ENCODE measurements at regions of chr1 and their contacts with region 1.

Region 1: DNA sequence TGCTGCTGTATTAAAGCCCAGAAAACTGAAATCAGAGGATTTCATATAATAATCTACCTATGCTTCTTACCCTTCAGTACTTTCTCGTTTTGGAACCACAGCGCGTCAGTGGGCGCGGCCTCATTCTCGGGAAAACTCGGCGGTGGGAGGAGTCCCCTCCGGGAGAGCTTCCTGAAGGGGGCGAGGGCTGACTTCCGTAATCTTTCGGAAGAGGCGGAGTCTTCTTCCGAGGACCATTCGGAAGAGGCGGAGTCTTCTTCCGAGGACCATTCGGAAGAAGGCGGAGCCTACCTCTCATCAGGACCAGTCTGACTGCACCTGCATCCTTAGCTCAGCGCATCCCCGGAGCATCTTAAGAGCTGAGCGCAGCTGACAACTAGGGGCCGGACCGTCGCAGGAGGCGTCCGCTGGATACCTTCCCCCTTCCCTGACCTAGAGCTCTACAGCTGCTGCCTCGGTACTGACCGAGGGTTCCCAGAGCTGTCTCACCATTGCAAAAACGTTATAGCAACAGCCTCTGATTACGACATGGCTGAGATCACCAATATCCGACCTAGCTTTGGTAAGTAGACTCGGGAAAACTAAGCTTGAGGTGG is at the start of gene SYT11:
- DNase-seq: peak; percentile 98
- H3K4me3 Mint-ChIP-seq: peak within 1 kb of the TSS; percentile 100
- H3K27ac Mint-ChIP-seq: peak within 1 kb of the TSS; percentile 83
- H3K4me1 Mint-ChIP-seq: peaks cover 53% of the 10 kb centered on the region
- H3K27me3 Mint-ChIP-seq: peaks cover 24% of the 10 kb centered on the region
- total RNA-seq, gene SYT11: 6.3 to 7.0 TPM

Region 2: DNA sequence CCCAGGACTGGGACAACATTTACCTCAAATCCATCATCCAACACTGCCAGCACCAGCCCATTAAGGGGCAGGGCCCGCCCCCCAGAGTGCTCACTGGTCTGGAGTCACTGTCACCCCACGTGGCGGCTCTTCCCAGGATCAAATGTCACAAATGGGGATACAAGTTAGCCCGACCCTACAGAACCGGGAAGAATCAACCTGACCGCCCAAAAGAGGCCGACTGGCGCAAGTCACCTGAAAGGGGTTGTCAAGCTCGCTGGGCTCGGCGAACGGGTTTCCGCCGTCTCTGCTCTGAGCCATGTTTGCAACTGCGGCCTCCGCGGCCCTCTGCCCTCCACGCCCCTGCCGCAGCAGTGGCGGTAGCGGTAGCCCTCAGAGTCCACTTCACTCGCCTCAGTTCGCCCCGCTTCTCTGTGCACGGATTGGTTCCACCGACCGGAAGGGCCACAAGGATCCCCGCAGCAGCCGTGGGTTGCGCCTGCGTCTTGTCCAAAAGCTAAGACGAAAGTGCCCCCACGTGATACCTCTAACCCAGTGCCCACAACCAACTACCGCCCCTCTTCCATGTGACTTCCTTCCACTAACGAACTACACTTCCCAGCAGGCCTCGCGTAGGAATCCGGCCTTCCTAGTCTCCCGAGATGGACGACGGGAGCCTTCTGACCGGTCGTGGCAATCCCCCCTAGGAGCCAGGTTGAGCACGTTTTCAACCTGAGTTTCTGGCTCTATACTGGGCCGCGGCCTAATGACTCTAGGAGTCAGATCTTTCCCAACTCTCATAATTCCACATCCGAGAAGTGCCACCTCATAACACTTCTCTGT is 597.3 kb before region 1 on chr1 and contains the start of gene SCAMP3:
- CTCF ChIA-PET with region 1: no interaction called
- intact Hi-C with region 1: loop called (anchors 5 kb)
- DNase-seq: peak; percentile 95
- H3K4me3 Mint-ChIP-seq: peak within 1 kb of the TSS; percentile 95
- H3K27ac Mint-ChIP-seq: peak within 1 kb of the TSS; percentile 93
- H3K4me1 Mint-ChIP-seq: peaks cover 27% of the 10 kb centered on the region
- H3K27me3 Mint-ChIP-seq: no peaks in the 10 kb centered on the region
- total RNA-seq, gene SCAMP3: 80.3 to 82.9 TPM

Region 3: GRCh38 chr1:155305881-155306391 is 553.4 kb before region 1 on chr1:
- CTCF ChIA-PET with region 1: no interaction called
- intact Hi-C with region 1: no loop called
- DNase-seq: no peak
- H3K4me3 Mint-ChIP-seq: no peak overlapping the region
- H3K27ac Mint-ChIP-seq: peak overlapping the region; percentile 61
- H3K4me1 Mint-ChIP-seq: peaks cover 17% of the 10 kb centered on the region
- H3K27me3 Mint-ChIP-seq: no peaks in the 10 kb centered on the region

Region 4: DNA sequence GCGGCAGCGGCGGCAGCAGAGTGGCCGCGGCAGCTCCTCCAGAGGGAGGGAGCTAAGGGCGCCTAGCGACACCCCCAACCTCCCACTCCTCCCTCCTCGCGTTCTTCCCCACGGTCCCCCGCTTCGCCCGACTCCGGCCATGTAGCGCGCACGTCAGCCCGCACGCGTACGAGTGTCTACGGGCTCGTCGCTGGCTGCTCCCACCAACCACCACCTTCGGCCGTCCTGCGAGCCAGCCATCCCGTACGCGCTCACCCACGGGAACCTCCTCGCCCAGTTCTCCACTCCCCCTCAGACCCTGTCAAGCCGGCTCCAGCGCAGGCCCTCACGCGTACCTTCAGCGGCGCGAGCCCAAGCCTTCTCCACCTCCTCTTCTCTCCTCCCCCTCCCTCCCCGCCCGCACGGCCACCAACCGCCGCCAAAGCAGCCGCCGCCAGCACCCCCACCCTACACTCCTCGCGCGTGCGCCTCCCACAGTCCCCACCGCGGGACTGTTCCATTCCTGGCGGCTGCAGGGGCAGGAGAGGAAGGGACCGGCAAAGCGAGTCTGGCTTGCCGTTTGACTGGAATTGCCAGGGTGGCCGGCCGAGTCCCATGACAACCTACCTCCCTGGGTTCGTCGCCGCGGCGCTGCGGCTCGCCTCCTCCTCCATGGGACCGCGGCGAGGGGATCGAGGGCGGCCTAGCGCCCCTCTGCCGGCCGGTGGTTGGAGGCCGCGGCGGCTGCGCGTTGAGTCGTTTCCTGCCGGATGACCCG is 170.8 kb before region 1 on chr1 and contains the start of gene YY1AP1:
- CTCF ChIA-PET with region 1: no interaction called
- intact Hi-C with region 1: loop called (anchors 5 kb)
- DNase-seq: peak; percentile 93
- H3K4me3 Mint-ChIP-seq: peak within 1 kb of the TSS; percentile 97
- H3K27ac Mint-ChIP-seq: peak within 1 kb of the TSS; percentile 95
- H3K4me1 Mint-ChIP-seq: peaks cover 70% of the 10 kb centered on the region
- H3K27me3 Mint-ChIP-seq: no peaks in the 10 kb centered on the region
- total RNA-seq, gene YY1AP1: 54.8 to 59.5 TPM

Region 5: DNA sequence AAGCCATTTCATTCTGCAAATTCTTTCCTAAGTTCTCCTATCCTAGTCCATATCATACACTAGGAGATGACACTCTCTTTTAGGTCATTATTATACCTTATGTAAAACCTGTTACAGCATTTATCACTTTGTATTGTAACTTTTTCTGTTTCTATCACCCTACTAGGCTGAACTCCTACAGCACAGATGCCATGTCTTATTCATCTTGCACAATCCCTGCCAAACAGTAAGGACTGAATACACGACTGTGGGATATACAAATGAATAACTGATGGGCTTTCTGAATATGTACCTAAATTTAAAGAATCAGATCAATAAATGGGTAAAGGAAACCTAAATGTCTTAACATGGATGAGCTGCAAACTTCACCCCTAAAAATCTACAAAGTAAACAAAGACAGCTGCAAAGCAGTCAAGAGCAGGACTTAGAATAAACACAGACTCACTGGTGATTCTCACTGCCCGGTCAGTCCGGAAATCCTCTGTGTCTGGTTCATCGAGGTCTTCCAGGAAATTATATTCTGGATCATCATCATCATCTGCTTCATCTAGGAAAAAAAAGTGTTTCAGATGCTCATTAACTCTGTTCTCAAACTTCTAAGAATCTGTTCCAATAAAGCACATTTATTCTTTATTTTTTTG is 64.6 kb before region 1 on chr1:
- CTCF ChIA-PET with region 1: no interaction called
- intact Hi-C with region 1: no loop called
- DNase-seq: no peak
- H3K4me3 Mint-ChIP-seq: no peak overlapping the region
- H3K27ac Mint-ChIP-seq: no peak overlapping the region
- H3K4me1 Mint-ChIP-seq: no peaks in the 10 kb centered on the region
- H3K27me3 Mint-ChIP-seq: no peaks in the 10 kb centered on the region

Region 6: DNA sequence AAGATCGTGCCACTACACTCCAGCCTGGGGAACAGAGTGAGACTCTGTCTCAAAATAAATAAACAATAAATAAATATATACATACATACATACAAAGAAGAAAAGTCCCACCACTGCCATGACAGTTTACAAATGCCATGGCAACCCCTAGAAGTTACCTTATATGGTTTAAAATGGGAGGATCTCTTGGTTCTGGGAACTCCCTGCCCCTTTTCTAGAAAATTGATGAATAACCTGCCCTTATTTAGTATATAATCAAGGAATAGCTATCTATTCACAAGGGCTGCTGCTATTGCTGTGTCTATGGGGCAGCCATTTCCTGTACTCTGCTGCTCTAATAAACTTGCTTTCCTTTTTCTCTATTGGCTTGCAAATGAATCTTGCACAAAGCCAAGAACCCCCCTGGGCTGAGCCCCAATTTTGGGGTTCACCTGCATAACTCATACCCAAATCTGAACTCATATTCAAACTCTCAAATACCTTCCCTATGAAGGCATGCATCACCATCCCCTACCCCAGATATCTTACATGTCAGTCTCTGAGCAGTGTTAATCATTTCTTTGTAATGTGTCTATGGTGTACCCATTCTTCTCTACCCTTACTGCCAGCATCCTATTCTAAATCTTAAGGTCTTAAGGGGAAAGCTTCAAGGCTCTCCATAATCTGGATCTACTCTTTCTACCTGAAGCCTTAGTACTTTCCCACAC is 11.4 kb before region 1 on chr1:
- CTCF ChIA-PET with region 1: no interaction called
- intact Hi-C with region 1: loop called (anchors 1 kb)
- DNase-seq: peak; percentile 10
- H3K4me3 Mint-ChIP-seq: peak overlapping the region; percentile 40
- H3K27ac Mint-ChIP-seq: peak overlapping the region; percentile 76
- H3K4me1 Mint-ChIP-seq: peaks cover 57% of the 10 kb centered on the region
- H3K27me3 Mint-ChIP-seq: no peaks in the 10 kb centered on the region

Region 7: DNA sequence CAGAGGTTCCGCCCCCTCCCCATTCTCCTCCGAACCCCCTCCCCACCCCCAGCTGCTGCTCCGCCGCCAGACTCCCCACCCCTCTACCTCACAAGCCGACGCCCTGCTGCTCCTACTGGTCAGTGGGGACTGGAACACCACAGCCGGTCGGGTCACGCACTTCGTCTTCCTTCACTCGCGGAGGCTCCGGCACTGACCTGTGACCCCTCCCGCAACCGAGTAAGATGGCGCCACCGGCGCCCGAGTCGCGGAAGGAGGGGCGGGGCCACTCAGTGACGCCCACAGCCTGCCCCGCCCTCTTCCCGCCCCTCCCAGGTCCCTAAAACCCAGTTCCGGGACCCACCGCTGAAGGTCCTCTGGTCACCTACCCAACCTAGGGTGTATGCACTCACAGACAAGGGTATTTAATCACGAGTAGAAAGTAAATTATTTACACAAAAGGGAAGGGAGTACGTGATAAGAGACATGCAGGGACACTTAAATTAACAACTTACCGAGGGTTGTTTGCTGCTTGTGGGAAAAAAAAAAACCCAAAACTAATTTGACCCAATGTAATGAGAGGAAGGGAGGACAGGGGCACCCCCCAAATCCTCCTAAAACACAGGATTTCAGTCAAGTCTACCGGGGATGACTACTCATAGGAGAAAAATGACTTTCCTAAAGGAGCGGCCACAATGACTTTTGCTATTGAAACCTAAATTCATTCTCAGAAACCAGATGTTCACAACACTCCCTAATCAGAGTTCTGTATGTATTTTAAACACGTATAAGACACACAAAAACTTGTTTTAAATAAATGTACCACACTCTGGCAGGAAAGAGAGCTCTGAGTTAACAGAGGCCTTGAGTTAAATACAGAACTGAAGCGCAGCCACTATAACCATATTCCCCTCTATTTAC is 52.1 kb after region 1 on chr1 and contains the start of gene RIT1:
- CTCF ChIA-PET with region 1: no interaction called
- intact Hi-C with region 1: loop called (anchors 1 kb)
- DNase-seq: peak; percentile 89
- H3K4me3 Mint-ChIP-seq: peak within 1 kb of the TSS; percentile 99
- H3K27ac Mint-ChIP-seq: peak within 1 kb of the TSS; percentile 97
- H3K4me1 Mint-ChIP-seq: peaks cover 21% of the 10 kb centered on the region
- H3K27me3 Mint-ChIP-seq: no peaks in the 10 kb centered on the region
- total RNA-seq, gene RIT1: 17.1 to 21.3 TPM